Transverse colon (tissue), 4 donors: ENCODE measurements at regions of chr6 and their contacts with region 1.

Region 1: GRCh38 chr6:129598244-129599187 is 111.5 kb downstream of the ARHGAP18 start:
- DNase-seq: no peak
- H3K4me3 ChIP-seq: no peak overlapping the region
- H3K27ac ChIP-seq: no peak overlapping the region
- H3K4me1 ChIP-seq: peaks cover 0 to 6% (median 0%) of the 10 kb centered on the region in 4 donors
- H3K27me3 ChIP-seq: no peaks in the 10 kb centered on the region
- CTCF ChIP-seq: peak; percentile 79 to 89 (median 85)
- EP300 ChIP-seq: no peak
- POLR2A ChIP-seq: no peak

Region 2: DNA sequence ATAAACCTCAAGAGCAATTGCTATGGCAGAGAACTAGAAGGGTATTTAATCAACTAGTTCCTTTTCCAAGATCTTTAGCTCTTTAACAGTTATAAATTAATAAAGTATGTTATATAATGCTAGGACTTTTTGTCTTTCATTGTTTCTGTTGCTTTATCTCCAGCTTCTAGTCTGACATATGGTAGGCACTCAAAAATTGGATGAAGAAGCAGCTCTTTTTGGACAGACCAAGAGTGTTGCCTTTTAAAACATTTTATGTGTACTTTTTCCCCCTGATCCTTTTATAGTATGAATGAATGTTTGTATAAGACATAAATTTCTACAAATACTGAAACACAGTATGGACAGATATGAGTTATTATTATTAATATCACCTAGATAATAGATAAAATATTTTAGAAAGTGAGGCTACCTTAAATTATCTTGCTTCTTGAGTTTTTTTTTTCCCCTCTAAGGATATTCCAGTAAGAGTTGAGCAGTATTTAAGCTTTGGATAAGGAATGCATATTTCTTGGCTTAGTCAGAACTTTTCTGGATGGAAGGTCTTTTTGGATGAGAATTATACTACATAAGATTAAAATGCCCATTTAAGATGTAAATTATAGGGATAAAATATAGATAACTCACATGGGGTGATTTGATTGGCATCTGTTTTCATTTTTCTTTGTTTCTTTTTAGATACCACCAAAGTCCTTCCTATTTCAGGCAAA is 699.0 kb before region 1 on chr6:
- in situ Hi-C with region 1: no loop called
- intact Hi-C with region 1: no loop called
- DNase-seq: no peak
- H3K4me3 ChIP-seq: no peak overlapping the region
- H3K27ac ChIP-seq: no peak overlapping the region
- H3K4me1 ChIP-seq: no peaks in the 10 kb centered on the region
- H3K27me3 ChIP-seq: no peaks in the 10 kb centered on the region
- CTCF ChIP-seq: no peak
- EP300 ChIP-seq: no peak
- POLR2A ChIP-seq: no peak

Region 3: GRCh38 chr6:129567374-129567773 is 31.1 kb before region 1 on chr6:
- in situ Hi-C with region 1: no loop called
- intact Hi-C with region 1: no loop called
- DNase-seq: no peak
- H3K4me3 ChIP-seq: no peak overlapping the region
- H3K27ac ChIP-seq: no peak overlapping the region
- H3K4me1 ChIP-seq: no peaks in the 10 kb centered on the region
- H3K27me3 ChIP-seq: no peaks in the 10 kb centered on the region
- CTCF ChIP-seq: no peak
- EP300 ChIP-seq: no peak
- POLR2A ChIP-seq: no peak

Region 4: DNA sequence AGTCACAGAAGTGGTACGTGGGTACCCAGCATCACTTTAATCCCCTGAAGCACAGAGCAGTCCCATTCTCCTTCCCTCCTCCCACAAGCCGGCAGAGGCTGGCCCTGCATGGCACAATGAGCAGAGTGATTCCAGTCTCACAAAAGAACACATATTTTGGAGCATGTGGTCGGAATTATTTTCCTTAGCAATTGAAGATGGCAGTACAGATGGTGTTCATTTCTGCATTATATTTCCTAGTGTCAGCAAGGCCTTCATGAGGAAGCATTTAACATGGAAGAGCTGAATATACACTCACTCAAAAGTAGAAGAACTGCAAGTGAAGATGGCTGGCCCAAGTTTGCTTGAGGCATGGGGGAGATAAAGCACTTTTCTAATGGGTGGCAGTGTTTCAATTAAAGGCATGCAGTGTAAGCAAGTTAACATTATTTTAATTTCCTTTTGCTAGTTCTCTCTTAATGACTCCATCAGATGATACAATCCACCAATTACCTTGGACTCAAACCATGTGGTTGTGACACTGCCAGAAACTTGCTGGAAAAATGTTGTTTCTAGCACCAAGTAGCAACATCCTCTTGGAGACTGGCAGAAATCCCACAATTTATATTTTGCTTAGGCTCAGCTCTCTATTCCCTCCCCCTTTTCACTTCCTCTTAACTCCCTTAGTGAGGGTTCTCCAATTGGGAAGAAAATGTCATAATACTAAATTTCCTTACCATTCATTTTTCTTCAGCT is 37.0 kb after region 1 on chr6:
- in situ Hi-C with region 1: no loop called
- intact Hi-C with region 1: no loop called
- DNase-seq: no peak
- H3K4me3 ChIP-seq: no peak overlapping the region
- H3K27ac ChIP-seq: peak overlapping the region; percentile 20 to 50 (median 28)
- H3K4me1 ChIP-seq: peaks cover 0 to 38% (median 17%) of the 10 kb centered on the region in 4 donors
- H3K27me3 ChIP-seq: no peaks in the 10 kb centered on the region
- CTCF ChIP-seq: no peak
- EP300 ChIP-seq: no peak
- POLR2A ChIP-seq: no peak

Region 5: GRCh38 chr6:129719692-129720091 is 121.2 kb after region 1 on chr6:
- in situ Hi-C with region 1: loop called in 1 of 4 experiments (anchors 10 kb)
- intact Hi-C with region 1: no loop called
- DNase-seq: no peak
- H3K4me3 ChIP-seq: no peak overlapping the region
- H3K27ac ChIP-seq: peak overlapping the region in 2 of 4 donors; percentile 12 to 18
- H3K4me1 ChIP-seq: no peaks in the 10 kb centered on the region
- H3K27me3 ChIP-seq: no peaks in the 10 kb centered on the region
- CTCF ChIP-seq: no peak
- EP300 ChIP-seq: no peak
- POLR2A ChIP-seq: no peak

Region 6: GRCh38 chr6:129730477-129731165 is 132.1 kb after region 1 on chr6:
- in situ Hi-C with region 1: loop called (anchors 5 to 25 kb)
- intact Hi-C with region 1: loop called (anchors 10 kb)
- DNase-seq: no peak
- H3K4me3 ChIP-seq: no peak overlapping the region
- H3K27ac ChIP-seq: no peak overlapping the region
- H3K4me1 ChIP-seq: no peaks in the 10 kb centered on the region
- H3K27me3 ChIP-seq: no peaks in the 10 kb centered on the region
- CTCF ChIP-seq: peak; percentile 52 to 74 (median 60)
- EP300 ChIP-seq: no peak
- POLR2A ChIP-seq: no peak

Region 7: DNA sequence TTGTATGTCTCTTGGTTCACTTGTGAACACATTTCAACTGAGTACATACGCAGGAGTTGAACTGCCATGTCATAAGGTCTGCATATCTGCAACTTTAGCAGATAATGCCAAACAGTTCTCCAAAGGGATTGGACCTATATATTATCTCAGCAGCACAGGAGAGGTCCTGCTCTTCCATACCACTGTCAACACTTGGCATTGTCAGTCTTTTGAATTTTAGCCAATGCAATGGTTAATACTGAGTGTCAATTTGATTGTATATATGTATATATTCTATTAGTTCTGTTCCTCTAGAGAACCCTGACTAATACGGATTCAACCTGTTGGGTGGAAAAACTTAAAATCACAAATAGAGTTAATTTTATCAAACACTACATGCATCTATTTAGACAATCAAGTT is 137.6 kb after region 1 on chr6:
- in situ Hi-C with region 1: loop called in 3 of 4 experiments (anchors 5 to 25 kb)
- intact Hi-C with region 1: loop called (anchors 10 kb)
- DNase-seq: no peak
- H3K4me3 ChIP-seq: no peak overlapping the region
- H3K27ac ChIP-seq: no peak overlapping the region
- H3K4me1 ChIP-seq: no peaks in the 10 kb centered on the region
- H3K27me3 ChIP-seq: no peaks in the 10 kb centered on the region
- CTCF ChIP-seq: no peak
- EP300 ChIP-seq: no peak
- POLR2A ChIP-seq: no peak

Region 8: GRCh38 chr6:130020907-130021629 is 422.6 kb after region 1 on chr6:
- in situ Hi-C with region 1: loop called in 3 of 4 experiments (anchors 10 to 25 kb)
- intact Hi-C with region 1: loop called (anchors 10 kb)
- DNase-seq: peak; percentile 87
- H3K4me3 ChIP-seq: peak overlapping the region; percentile 62 to 92 (median 83)
- H3K27ac ChIP-seq: peak overlapping the region; percentile 85 to 90 (median 88)
- H3K4me1 ChIP-seq: peaks cover 0 to 9% (median 3%) of the 10 kb centered on the region in 4 donors
- H3K27me3 ChIP-seq: no peaks in the 10 kb centered on the region
- CTCF ChIP-seq: peak; percentile 71 to 84 (median 76)
- EP300 ChIP-seq: no peak
- POLR2A ChIP-seq: peak; percentile 17